GM13977 (cell line): ENCODE measurements at regions of chr19 and their contacts with region 1.

Region 1: GRCh38 chr19:23969630-23970029 is 54.9 kb downstream of the ZNF726 start:
- DNase-seq: no peak
- CTCF ChIP-seq: no peak

Region 2: GRCh38 chr19:23872282-23872919 is 97.2 kb before region 1 on chr19:
- in situ Hi-C with region 1: loop called (anchors 5 kb)
- DNase-seq: no peak
- CTCF ChIP-seq: no peak